Ovary (tissue), 10 donors: ENCODE measurements at regions of chr11 and their contacts with region 1.

Region 1: GRCh38 chr11:11996321-11997048 is 11.9 kb downstream of the DKK3 start:
- DNase-seq: no peak
- H3K4me3 ChIP-seq: no peak overlapping the region
- H3K27ac ChIP-seq: no peak overlapping the region
- H3K4me1 ChIP-seq: no peaks in the 10 kb centered on the region
- H3K27me3 ChIP-seq: no peaks in the 10 kb centered on the region
- CTCF ChIP-seq: no peak
- EP300 ChIP-seq: no peak
- POLR2A ChIP-seq: no peak

Region 2: DNA sequence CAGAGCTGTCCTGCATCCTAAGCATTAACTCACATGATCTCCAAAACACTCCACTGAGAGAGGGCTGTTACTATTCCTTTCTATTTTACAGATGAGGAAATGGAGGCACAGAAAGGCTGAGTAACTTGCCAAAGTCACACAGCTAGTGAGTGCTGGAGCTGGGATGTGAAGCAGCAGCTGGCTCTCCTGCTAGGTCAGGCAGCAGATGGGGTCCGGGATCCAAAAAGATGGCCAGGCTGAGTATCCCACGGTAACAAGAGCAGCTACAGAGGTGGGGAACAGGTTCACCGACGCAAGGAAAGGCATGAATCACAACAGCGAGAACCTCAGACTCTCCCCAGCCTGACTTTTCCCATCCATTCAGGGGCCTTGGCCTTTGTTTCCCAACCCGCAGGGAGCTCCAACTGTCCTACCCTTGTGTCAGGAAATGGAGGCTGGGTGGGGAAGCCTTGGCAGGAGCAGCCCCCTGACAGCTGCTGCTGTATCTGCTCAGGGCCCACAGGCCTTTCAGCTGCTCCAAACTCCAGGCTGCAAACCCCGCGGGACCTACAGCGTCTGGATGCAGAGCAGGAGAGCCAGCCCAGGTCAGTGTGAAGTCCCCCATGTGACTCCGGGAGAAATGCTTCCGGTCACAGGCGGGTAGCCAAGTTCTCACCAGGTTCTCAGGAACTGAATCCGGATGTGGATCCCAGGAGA is 17.5 kb before region 1 on chr11:
- intact Hi-C with region 1: loop called in 1 of 4 experiments (anchors 1 kb)
- DNase-seq: peak; percentile 77 to 88 (median 81)
- H3K4me3 ChIP-seq: no peak overlapping the region
- H3K27ac ChIP-seq: peak overlapping the region; percentile 2 to 47
- H3K4me1 ChIP-seq: peaks cover 24% of the 10 kb centered on the region
- H3K27me3 ChIP-seq: no peaks in the 10 kb centered on the region
- CTCF ChIP-seq: no peak
- EP300 ChIP-seq: no peak
- POLR2A ChIP-seq: peak; percentile 15

Region 3: DNA sequence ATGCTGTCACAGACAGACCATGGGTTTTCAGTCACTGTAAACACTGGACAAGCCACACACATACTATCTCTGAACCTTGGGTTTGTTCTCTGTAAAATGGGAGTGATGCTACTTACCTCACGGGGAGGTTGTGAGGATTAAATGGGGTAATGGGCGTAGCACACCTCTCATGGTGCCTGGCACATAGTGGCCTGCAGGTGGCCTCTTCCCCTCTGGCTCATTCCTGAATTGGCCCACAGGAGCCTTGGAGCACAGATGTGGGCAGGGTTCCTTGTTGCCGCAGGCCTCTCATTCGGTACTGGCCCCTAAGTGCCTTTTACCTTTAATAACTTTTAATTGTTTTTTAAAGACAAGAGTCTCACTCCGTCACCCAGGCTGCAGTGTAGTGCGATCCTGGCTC is 125.6 kb after region 1 on chr11:
- intact Hi-C with region 1: no loop called
- DNase-seq: no peak
- H3K4me3 ChIP-seq: no peak overlapping the region
- H3K27ac ChIP-seq: no peak overlapping the region
- H3K4me1 ChIP-seq: peaks cover 12% of the 10 kb centered on the region
- H3K27me3 ChIP-seq: no peaks in the 10 kb centered on the region
- CTCF ChIP-seq: no peak
- EP300 ChIP-seq: no peak
- POLR2A ChIP-seq: no peak